ENCODE measurements at regions of chr20 and their contacts with region 1.

Region 1: GRCh38 chr20:49140834-49141233 is 47.3 kb downstream of the STAU1 start:
- DNase-seq: no peak
- ATAC-seq: no peak
- H3K4me3 ChIP-seq: no peak overlapping the region
- H3K27ac ChIP-seq: no peak overlapping the region
- H3K4me1 ChIP-seq: peaks cover 0 to 12% (median 0%) of the 10 kb centered on the region in 9 donors
- H3K27me3 ChIP-seq: no peaks in the 10 kb centered on the region
- CTCF ChIP-seq: no peak

Region 2: GRCh38 chr20:49161428-49162152 is 20.8 kb after region 1 on chr20:
- intact Hi-C with region 1: loop called in 1 of 10 experiments (anchors 2 kb)
- DNase-seq: no peak
- ATAC-seq: no peak
- H3K4me3 ChIP-seq: no peak overlapping the region
- H3K27ac ChIP-seq: no peak overlapping the region
- H3K4me1 ChIP-seq: peaks cover 0 to 11% (median 4%) of the 10 kb centered on the region in 9 donors
- H3K27me3 ChIP-seq: no peaks in the 10 kb centered on the region
- CTCF ChIP-seq: no peak

Region 3: DNA sequence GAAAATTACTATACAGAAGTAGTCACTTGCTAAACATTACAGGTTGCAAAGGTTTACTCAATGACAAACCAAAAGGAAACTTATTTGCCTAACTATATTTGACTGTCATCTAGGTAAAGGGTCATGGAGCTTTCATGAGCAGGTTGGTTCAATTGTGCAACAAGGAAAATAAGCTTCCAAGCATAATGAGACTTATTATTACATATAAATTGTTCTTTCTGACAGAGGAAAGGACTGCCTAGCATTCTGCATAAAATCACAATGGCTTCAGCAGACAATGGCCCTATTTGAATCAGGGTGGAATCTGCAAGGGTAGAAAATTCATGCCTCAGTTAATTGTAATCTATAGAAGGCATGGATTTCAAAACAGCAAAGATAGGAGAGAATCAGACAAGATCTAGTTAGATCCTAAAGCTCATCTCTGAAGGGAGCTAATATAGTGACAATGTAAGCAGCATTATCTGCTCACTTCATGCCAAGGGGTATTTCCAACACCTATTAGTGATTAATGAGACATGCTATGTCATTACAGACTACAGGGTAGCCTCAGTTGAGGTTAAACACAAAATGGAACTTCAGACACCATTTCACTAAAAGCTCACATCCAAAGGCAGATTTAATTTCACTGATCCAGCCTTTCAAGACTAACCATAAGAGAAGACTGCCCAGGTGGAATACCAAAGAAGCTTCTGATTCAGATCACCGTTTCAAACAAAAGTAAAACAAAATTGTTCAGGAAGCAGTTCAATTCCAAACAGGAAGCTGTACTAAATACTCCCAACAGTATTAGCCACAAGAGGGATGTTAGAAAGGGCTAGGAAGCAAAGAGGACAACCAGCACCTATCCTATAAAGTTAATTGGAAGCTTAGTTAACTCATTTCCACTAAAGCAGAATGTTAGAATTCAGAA is 38.8 kb after region 1 on chr20:
- intact Hi-C with region 1: loop called in 3 of 10 experiments (anchors 5 to 10 kb)
- DNase-seq: no peak
- ATAC-seq: peak in 1 of 8 donors; percentile 24
- H3K4me3 ChIP-seq: no peak overlapping the region
- H3K27ac ChIP-seq: peak overlapping the region in 6 of 10 donors; percentile 7 to 70 (median 30)
- H3K4me1 ChIP-seq: peaks cover 0 to 64% (median 44%) of the 10 kb centered on the region in 9 donors
- H3K27me3 ChIP-seq: no peaks in the 10 kb centered on the region
- CTCF ChIP-seq: no peak